IMR-90 (cell line): ENCODE measurements at regions of chr18 and their contacts with region 1.

Region 1: DNA sequence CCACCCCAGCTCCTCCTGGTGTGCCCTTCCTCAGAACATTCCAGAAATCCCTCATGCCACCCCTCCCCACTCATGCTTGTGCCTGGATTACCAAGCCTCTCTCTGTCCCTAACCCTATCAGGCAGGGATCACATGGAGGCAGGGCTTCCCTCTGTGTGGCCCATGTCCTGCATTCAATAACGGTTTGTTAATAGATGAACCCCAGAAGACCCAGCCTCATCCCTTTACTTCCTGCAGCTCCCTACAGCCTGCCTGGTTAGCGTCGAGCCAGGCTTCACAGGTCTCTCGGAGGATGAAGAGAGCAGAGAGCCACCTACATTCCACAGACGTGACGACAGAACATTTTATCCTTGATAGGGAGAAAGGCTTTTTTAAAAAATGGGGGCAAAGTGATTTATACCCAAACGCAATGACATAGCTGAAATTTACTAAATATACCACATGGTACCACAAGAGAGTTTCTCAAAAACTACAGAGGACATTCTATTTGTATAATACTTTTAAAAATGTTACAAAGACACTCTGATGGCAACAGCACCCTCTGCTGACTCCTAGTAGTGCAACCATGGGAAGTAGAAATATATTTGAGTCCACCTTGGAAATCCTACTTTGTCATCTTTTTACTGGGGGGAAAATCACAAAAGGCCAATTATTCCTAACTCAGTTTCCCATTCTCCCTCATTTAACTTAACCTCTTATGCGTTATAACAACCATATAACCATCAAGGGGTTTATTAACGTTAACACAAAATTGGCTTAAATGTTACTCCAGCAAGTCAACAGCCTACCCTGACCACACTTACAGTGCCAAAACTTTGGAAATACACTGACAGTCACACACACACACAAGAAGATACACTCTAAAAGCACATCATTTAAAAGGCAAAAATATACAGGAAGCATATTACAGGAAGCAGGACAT is 30.7 kb downstream of the FBXO15 start:
- DNase-seq: peak; percentile 65
- ATAC-seq: peak; percentile 63
- H3K4me3 ChIP-seq: no peak overlapping the region
- H3K27ac ChIP-seq: peak overlapping the region; percentile 20; the same call in 1 of the 2 replicates
- H3K4me1 ChIP-seq: peaks cover 11% of the 10 kb centered on the region
- H3K27me3 ChIP-seq: no peaks in the 10 kb centered on the region
- CTCF ChIP-seq: peak; percentile 89
- POLR2A ChIP-seq: no peak
- RAD21 ChIP-seq: peak; percentile 85

Region 2: GRCh38 chr18:72869226-72870185 is 1247.4 kb before region 1 on chr18:
- CTCF ChIA-PET with region 1: no interaction called
- POLR2A ChIA-PET with region 1: no interaction called
- dilution Hi-C with region 1: no loop called
- in situ Hi-C with region 1: no loop called
- intact Hi-C with region 1: loop called (anchors 10 kb)
- DNase-seq: no peak
- ATAC-seq: no peak
- H3K4me3 ChIP-seq: no peak overlapping the region
- H3K27ac ChIP-seq: no peak overlapping the region
- H3K4me1 ChIP-seq: 0 out of 2 replicates have a peak, but pooled peaks cover 1% of the 10 kb centered on the region
- H3K27me3 ChIP-seq: peaks cover 35% of the 10 kb centered on the region
- CTCF ChIP-seq: no peak
- POLR2A ChIP-seq: no peak
- RAD21 ChIP-seq: no peak

Region 3: DNA sequence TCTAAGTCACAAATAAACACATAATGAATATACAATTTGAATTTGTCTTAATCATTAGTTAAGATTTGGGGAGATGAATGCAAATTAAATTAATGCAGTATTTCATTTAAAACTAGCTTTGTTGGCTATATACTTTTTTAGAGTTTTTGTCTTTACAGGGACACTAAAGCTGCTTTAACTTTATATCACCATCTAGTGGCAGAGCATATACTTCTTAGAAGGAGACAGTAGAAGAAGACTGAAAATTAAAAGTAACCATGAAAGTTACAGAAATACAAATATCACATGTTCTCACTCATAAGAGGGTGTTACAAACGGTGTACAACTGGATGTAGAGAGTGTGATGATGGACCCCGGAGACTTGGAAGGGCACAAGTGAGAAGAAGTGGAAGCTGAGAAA is 980.8 kb before region 1 on chr18:
- CTCF ChIA-PET with region 1: interaction called, 3 read pairs
- POLR2A ChIA-PET with region 1: no interaction called
- dilution Hi-C with region 1: no loop called
- in situ Hi-C with region 1: no loop called
- intact Hi-C with region 1: loop called (anchors 10 kb)
- DNase-seq: no peak
- ATAC-seq: peak; percentile 56; the same call in 1 of the 2 replicates
- H3K4me3 ChIP-seq: no peak overlapping the region
- H3K27ac ChIP-seq: no peak overlapping the region
- H3K4me1 ChIP-seq: no peaks in the 10 kb centered on the region
- H3K27me3 ChIP-seq: no peaks in the 10 kb centered on the region
- CTCF ChIP-seq: peak; percentile 37; the same call in 1 of the 2 replicates
- POLR2A ChIP-seq: no peak
- RAD21 ChIP-seq: peak; percentile 28; the same call in 1 of the 2 replicates

Region 4: DNA sequence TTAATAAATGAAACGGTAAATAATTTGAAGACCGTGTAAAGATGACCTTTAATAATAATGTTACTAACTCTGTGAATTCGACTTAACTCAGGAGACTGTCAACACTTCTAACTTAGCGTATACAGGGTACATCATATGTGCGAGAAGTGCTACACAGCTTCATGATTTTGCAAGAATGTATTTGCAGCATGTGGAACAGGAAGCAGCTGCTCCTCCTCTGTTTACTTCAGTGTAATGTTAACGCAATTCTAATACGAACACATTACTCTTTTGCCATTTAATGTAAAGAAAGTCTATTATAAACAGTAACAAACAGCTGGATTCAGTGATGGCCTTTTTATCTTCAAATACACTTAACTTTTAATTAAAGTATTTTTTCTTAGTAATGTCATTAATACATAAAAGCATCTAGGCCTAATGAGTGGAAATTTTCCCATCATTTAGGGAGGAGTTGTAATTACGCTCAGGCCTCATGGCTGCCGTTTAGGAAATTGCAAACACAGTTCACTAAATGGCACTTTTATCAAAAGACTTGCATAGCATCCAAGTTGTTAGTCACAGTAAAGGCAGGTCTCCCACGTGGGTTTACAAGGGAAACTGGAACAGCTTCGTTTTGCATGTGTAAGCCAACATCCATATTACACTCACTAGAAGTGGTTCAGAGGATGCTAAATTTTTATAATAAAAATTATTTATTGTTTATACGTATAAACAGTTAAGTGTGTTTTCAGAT is 605.0 kb before region 1 on chr18:
- CTCF ChIA-PET with region 1: no interaction called
- POLR2A ChIA-PET with region 1: no interaction called
- dilution Hi-C with region 1: no loop called
- in situ Hi-C with region 1: no loop called
- intact Hi-C with region 1: loop called (anchors 10 kb)
- DNase-seq: peak; percentile 87
- ATAC-seq: peak; percentile 85
- H3K4me3 ChIP-seq: no peak overlapping the region
- H3K27ac ChIP-seq: peak overlapping the region; percentile 57; the same call in 1 of the 2 replicates
- H3K4me1 ChIP-seq: peaks cover 8% of the 10 kb centered on the region
- H3K27me3 ChIP-seq: no peaks in the 10 kb centered on the region
- CTCF ChIP-seq: no peak
- POLR2A ChIP-seq: no peak
- RAD21 ChIP-seq: no peak; the same call in 1 of the 2 replicates

Region 5: GRCh38 chr18:73688847-73689711 is 427.8 kb before region 1 on chr18:
- CTCF ChIA-PET with region 1: no interaction called
- POLR2A ChIA-PET with region 1: no interaction called
- dilution Hi-C with region 1: no loop called
- in situ Hi-C with region 1: no loop called
- intact Hi-C with region 1: loop called (anchors 5 kb)
- DNase-seq: peak; percentile 98
- ATAC-seq: peak; percentile 77
- H3K4me3 ChIP-seq: no peak overlapping the region
- H3K27ac ChIP-seq: peak overlapping the region; percentile 96
- H3K4me1 ChIP-seq: peaks cover 34% of the 10 kb centered on the region
- H3K27me3 ChIP-seq: no peaks in the 10 kb centered on the region
- CTCF ChIP-seq: no peak
- POLR2A ChIP-seq: 0 out of 2 replicates have a peak, but pooled peaks have one; percentile 24
- RAD21 ChIP-seq: no peak; the same call in 1 of the 2 replicates

Region 6: GRCh38 chr18:73717573-73717972 is 399.3 kb before region 1 on chr18:
- CTCF ChIA-PET with region 1: no interaction called
- POLR2A ChIA-PET with region 1: no interaction called
- dilution Hi-C with region 1: no loop called
- in situ Hi-C with region 1: no loop called
- intact Hi-C with region 1: no loop called
- DNase-seq: peak; percentile 32
- ATAC-seq: no peak
- H3K4me3 ChIP-seq: no peak overlapping the region
- H3K27ac ChIP-seq: no peak overlapping the region
- H3K4me1 ChIP-seq: peaks cover 11% of the 10 kb centered on the region
- H3K27me3 ChIP-seq: no peaks in the 10 kb centered on the region
- CTCF ChIP-seq: no peak
- POLR2A ChIP-seq: no peak
- RAD21 ChIP-seq: no peak

Region 7: DNA sequence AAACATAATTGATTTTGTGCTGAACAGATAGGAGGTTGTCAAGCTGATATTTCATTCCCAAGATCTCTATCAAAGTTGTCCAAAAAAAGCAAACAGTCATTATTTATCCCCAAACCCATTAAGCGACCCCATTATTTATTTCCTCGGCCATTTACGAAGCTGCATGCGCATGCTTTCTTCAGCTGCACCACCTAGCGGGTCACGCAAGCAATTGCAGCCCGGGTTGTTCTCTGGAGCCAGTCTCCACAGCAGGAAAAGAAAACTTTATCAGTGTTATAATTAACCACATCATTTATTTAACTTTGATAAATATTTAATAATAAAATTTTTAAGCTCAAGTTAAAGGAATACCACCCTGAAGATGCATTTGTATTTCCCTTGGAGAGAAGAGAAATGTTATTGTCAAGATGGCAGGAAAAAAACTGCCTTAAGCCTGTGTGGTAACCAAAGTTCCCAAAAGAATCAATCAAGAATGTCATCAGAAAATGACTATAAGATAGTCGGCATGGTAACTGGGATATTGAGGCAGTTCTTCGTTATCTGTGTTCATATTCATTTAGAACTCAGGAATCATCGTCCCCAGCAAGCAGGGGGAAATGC is 274.0 kb before region 1 on chr18:
- CTCF ChIA-PET with region 1: no interaction called
- POLR2A ChIA-PET with region 1: no interaction called
- dilution Hi-C with region 1: no loop called
- in situ Hi-C with region 1: no loop called
- intact Hi-C with region 1: loop called (anchors 5 kb)
- DNase-seq: peak; percentile 65
- ATAC-seq: peak; percentile 91
- H3K4me3 ChIP-seq: no peak overlapping the region
- H3K27ac ChIP-seq: no peak overlapping the region
- H3K4me1 ChIP-seq: 0 out of 2 replicates have a peak, but pooled peaks cover 4% of the 10 kb centered on the region
- H3K27me3 ChIP-seq: no peaks in the 10 kb centered on the region
- CTCF ChIP-seq: peak; percentile 91
- POLR2A ChIP-seq: no peak
- RAD21 ChIP-seq: peak; percentile 88

Region 8: GRCh38 chr18:74360852-74361655 is 244.2 kb after region 1 on chr18:
- CTCF ChIA-PET with region 1: no interaction called
- POLR2A ChIA-PET with region 1: no interaction called
- dilution Hi-C with region 1: no loop called
- in situ Hi-C with region 1: no loop called
- intact Hi-C with region 1: no loop called
- DNase-seq: no peak
- ATAC-seq: no peak
- H3K4me3 ChIP-seq: no peak overlapping the region
- H3K27ac ChIP-seq: no peak overlapping the region
- H3K4me1 ChIP-seq: no peaks in the 10 kb centered on the region
- H3K27me3 ChIP-seq: peaks cover 7% of the 10 kb centered on the region
- CTCF ChIP-seq: no peak
- POLR2A ChIP-seq: no peak
- RAD21 ChIP-seq: no peak